Testis (tissue), 5 donors: ENCODE measurements at regions of chr1 and their contacts with region 1.

Region 1: GRCh38 chr1:203625628-203626019 is 1.0 kb upstream of the ATP2B4 start:
- DNase-seq: peak; percentile 54
- H3K4me3 ChIP-seq: no peak overlapping the region
- H3K27ac ChIP-seq: peak overlapping the region in 1 of 2 donors; percentile 73
- H3K4me1 ChIP-seq: peaks cover 26% of the 10 kb centered on the region
- H3K27me3 ChIP-seq: no peaks in the 10 kb centered on the region
- CTCF ChIP-seq: peak in 1 of 3 experiments; percentile 32
- POLR2A ChIP-seq: no peak

Region 2: GRCh38 chr1:203692565-203693470 is 67.2 kb after region 1 on chr1:
- intact Hi-C with region 1: loop called (anchors 5 kb)
- DNase-seq: peak; percentile 90
- H3K4me3 ChIP-seq: no peak overlapping the region
- H3K27ac ChIP-seq: peak overlapping the region; percentile 40 to 79
- H3K4me1 ChIP-seq: peaks cover 58% of the 10 kb centered on the region
- H3K27me3 ChIP-seq: no peaks in the 10 kb centered on the region
- CTCF ChIP-seq: peak in 1 of 3 experiments; percentile 3
- POLR2A ChIP-seq: no peak